ENCODE measurements at regions of chr16 and their contacts with region 1.

Region 1: GRCh38 chr16:15765880-15766279 is 90.9 kb downstream of the MYH11 start:
- DNase-seq: no peak
- ATAC-seq: peak; percentile 87

Region 2: DNA sequence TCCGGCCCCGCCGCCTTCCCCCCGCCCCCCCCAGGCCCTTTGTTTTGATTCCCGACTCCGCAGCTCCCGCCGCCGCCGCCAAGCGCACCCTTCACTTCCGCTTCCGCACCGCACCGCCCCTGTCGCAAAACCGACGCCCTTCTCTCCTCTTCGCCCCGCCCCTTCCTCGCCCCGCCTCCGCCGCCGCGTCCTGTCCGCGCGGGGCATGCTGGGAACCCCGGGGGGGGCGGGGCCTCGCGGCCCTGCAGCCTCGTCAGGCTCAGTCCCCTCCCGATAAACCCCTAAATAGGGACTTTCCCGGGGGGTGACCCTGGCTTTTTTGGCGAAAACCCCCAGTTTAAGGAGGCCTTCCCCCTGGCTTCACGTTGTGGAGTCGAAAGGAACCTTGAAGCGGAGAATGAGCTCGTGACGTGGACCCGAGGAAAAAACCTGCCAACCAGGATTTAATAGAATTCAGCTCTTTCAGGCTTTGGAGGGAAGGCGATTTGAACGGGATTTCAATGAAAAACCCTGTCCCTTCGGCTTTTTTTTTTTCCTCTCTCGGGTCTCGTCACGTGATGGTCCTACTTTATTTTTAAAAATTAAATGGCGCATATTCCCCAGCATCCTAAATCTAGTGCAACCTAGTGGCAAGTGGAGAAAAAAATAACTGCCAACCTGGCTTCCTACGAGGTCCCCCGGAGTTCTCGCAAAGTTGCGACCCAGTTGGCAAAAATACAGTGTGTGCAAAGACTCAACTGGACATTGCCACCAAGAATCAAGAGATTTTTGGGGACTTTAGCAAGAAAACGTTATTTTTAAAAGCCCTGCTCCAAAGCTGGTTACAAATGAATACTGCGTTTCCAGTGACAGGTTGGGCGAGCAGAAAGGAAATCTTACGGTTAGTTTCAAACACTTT is 122.6 kb before region 1 on chr16 and contains the start of gene MARF1:
- intact Hi-C with region 1: no loop called
- DNase-seq: peak; percentile 100
- ATAC-seq: peak; percentile 98
- total RNA-seq, gene MARF1: 53.6 TPM

Region 3: DNA sequence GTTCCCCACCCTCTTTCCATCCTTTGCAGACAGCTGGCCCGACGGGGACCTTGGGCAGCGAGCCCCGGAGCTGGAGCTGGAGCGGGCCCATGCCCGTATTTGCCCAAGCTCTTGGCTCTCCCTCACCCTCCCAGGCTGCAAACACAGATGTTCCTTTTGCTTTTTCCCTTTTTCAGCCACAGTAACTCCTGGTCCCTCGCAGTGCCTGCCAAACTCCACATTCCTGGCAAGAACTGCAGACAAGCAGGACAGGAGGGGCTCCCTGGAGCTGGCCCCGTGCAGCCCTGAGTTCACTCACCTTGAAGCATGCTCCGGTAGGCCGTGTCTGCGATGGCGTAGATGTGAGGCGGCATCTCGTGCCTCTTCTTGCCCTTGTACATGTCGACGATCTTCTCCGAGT is 57.1 kb after region 1 on chr16:
- intact Hi-C with region 1: loop called (anchors 2 kb)
- DNase-seq: no peak
- ATAC-seq: no peak

Region 4: DNA sequence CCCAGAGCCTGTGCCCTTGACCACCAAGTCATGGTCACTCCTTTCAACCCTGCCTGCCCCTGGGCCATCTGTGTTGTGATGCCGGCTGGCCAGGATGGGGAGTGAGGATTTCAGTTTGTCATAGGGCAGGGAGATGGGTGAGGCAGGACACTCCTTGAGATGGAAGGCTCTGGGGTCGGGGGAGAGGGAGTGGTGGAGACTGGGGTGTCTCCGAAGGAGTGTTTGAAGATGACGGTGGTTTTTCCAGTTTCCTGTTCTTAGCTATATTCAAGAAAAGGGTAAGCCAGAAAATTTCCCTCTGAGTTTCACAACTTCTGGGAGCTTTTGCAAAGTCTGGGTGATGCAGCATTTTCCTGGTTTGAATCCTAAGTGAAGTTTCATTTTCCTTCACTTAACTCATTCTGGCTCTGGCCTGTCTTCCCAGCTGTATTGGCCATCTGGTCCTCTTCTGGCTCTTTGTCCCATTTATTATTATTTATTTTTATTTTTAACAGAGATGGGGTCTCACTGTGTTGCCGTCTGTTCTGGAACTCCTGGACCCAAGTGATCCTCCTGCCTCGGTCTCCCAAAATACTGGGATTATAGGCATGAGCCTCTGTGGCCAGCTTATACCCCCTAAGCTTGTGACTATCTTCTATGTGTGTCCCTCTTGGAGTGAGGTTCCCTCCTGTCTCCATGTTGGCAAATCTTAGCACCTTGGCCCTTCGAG is 211.2 kb after region 1 on chr16:
- intact Hi-C with region 1: no loop called
- DNase-seq: no peak
- ATAC-seq: peak; percentile 69

Region 5: GRCh38 chr16:16137056-16137455 is 371.2 kb after region 1 on chr16:
- intact Hi-C with region 1: loop called (anchors 10 kb)
- DNase-seq: peak; percentile 15
- ATAC-seq: no peak

Measured in left ventricle myocardium superior (tissue), 1 donor.